ENCODE measurements at regions of chr17 and their contacts with region 1.

Region 1: GRCh38 chr17:28065706-28066105 is 23.2 kb downstream of the NLK start:
- DNase-seq: no peak

Region 2: DNA sequence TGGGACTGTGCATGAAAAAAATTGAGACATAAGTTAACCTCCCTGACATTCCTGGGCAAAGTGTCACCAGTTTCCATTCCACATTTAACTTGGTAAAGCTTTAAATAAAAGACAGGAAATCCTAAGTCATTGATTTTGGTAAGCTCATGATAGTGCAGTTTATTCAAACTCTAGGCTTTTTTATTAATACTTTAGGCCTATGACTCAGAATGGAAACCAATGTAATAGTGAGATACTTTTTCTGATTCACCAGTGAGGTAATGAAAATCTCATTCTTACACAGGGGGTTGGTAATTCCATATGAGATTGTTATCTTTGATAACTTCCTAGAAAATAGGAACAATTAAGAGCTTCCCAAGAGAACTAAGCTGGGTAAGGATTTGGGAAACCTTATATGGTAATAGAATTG is 67.9 kb after region 1 on chr17:
- intact Hi-C with region 1: loop called (anchors 10 kb)
- DNase-seq: no peak